ENCODE measurements at regions of chr1 and their contacts with region 1.

Region 1: GRCh38 chr1:201955009-201955728 is at the start of gene TIMM17A:
- DNase-seq: peak; percentile 94 to 96 (median 95)
- H3K4me3 ChIP-seq: peak within 1 kb of the TSS; percentile 73
- H3K27ac ChIP-seq: peak within 1 kb of the TSS; percentile 79
- H3K4me1 ChIP-seq: peaks cover 4% of the 10 kb centered on the region
- H3K27me3 ChIP-seq: no peaks in the 10 kb centered on the region
- CTCF ChIP-seq: peak in 2 of 3 donors; percentile 7 to 11
- EP300 ChIP-seq: no peak
- POLR2A ChIP-seq: peak; percentile 92
- total RNA-seq, gene TIMM17A: 19.9 to 38.1 (median 29.7) TPM

Region 2: DNA sequence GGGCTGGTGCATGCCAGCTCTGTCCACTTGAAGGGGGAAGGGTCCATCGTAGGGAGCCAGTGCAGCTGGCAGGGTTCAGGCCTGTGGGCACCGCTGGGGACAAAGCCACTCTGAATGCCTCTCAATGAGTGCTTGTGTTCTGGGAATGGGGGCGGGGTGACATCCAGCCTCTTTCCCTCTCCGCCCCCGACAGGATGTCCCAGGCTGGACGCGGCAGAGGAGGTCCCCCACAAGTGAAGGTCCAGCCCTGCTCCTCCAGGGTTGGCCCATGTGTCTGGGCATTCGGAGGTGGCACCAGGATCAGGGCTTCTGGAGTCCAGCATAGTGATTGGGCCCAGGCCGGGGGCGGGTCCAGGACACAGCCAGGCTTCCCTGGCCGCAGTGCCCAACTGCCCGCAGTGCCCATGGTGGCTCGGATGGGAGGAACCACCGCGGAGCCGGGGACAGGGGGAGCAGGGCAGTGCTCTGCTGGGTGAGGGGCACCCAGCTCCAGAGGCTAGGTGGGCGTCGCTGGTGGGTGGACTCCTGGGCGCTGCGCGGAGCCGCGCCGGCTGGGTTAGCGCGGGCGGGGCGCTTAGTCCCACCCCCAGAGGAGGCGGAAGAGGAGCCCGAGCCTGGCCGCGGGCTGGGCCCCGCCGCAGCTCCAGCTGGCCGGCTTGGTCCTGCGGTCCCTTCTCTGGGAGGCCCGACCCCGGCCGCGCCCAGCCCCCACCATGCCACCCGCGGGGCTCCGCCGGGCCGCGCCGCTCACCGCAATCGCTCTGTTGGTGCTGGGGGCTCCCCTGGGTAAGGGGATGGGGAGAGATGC is 66.7 kb before region 1 on chr1 and contains the start of gene SHISA4:
- intact Hi-C with region 1: loop called in 1 of 4 experiments (anchors 5 kb)
- DNase-seq: peak; percentile 57 to 77 (median 64)
- H3K4me3 ChIP-seq: peak within 1 kb of the TSS; percentile 57
- H3K27ac ChIP-seq: peak within 1 kb of the TSS; percentile 0 to 22
- H3K4me1 ChIP-seq: peaks cover 22% of the 10 kb centered on the region
- H3K27me3 ChIP-seq: no peaks in the 10 kb centered on the region
- CTCF ChIP-seq: no peak
- EP300 ChIP-seq: no peak
- POLR2A ChIP-seq: peak; percentile 23
- total RNA-seq, gene SHISA4: 16.8 to 37.9 (median 26.4) TPM

Region 3: GRCh38 chr1:201999625-202000238 is 44.6 kb after region 1 on chr1:
- intact Hi-C with region 1: loop called in 1 of 4 experiments (anchors 1 kb)
- DNase-seq: peak in 1 of 5 donors; percentile 32
- H3K4me3 ChIP-seq: no peak overlapping the region
- H3K27ac ChIP-seq: no peak overlapping the region
- H3K4me1 ChIP-seq: no peaks in the 10 kb centered on the region
- H3K27me3 ChIP-seq: no peaks in the 10 kb centered on the region
- CTCF ChIP-seq: peak; percentile 31 to 39 (median 36)
- EP300 ChIP-seq: no peak
- POLR2A ChIP-seq: no peak

Measured in ovary (tissue), 10 donors.